Activated CD8-positive, alpha-beta T cell treated with anti-CD3 and anti-CD28 coated beads for 36 hours (primary cell): ENCODE measurements at regions of chr7 and their contacts with region 1.

Region 1: GRCh38 chr7:18086165-18087030 is 58.8 kb upstream of the PRPS1L1 start:
- DNase-seq: peak; percentile 5
- ATAC-seq: peak; percentile 27
- H3K4me3 Mint-ChIP-seq: peak overlapping the region; percentile 52
- H3K27ac Mint-ChIP-seq: no peak overlapping the region
- H3K4me1 Mint-ChIP-seq: peaks cover 4% of the 10 kb centered on the region
- H3K27me3 Mint-ChIP-seq: peaks cover 34% of the 10 kb centered on the region
- CTCF ChIP-seq: no peak

Region 2: DNA sequence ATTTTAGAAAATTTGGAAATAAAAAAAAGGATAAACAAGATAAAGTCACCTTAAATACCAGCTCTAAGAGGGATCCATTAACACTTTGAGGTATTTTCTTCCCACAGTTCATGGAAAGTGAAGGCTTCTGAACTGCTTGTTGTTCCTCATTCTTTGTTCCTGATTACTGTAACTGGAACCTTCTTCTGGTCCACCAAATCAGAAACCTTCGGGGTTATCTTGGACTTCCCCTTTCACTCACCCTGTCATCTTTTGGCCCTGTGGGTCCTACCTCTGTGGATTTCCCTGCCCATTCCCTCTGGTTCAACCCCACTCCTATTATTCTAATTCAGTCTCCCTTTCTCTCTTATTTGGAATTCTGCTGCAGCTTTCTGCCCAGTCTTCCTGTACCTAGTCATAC is 57.8 kb after region 1 on chr7:
- CTCF ChIA-PET with region 1: no interaction called
- POLR2A ChIA-PET with region 1: no interaction called
- intact Hi-C with region 1: loop called (anchors 10 kb)
- DNase-seq: no peak
- ATAC-seq: no peak
- H3K4me3 Mint-ChIP-seq: no peak overlapping the region
- H3K27ac Mint-ChIP-seq: no peak overlapping the region
- H3K4me1 Mint-ChIP-seq: no peaks in the 10 kb centered on the region
- H3K27me3 Mint-ChIP-seq: peaks cover 7% of the 10 kb centered on the region
- CTCF ChIP-seq: no peak